Transverse colon (tissue), 4 donors: ENCODE measurements at regions of chr6 and their contacts with region 1.

Region 1: DNA sequence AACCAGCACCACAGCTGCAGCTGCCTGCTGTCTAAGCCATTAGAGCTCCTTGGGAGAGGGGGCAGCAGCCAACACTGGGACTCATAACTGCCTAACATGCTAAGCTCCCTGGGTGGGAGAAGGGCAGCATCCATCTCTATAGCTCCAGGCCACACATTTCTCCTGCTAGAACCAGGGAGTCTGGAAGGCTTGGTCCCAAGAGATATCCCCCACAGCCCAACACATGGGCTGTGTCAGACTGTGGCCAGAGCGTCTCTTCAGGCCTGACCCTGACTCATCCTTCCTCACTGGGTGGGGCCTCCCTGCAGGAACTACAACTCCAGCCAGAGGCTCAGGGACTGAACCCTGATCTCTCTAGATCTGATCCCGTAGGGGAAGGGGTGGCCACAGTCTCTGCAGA is 411.1 kb downstream of the HDGFL1 start:
- DNase-seq: no peak
- H3K4me3 ChIP-seq: no peak overlapping the region
- H3K27ac ChIP-seq: no peak overlapping the region
- H3K4me1 ChIP-seq: no peaks in the 10 kb centered on the region
- H3K27me3 ChIP-seq: no peaks in the 10 kb centered on the region
- CTCF ChIP-seq: no peak
- EP300 ChIP-seq: no peak
- POLR2A ChIP-seq: no peak

Region 2: GRCh38 chr6:23003671-23004467 is 23.4 kb after region 1 on chr6:
- in situ Hi-C with region 1: no loop called
- intact Hi-C with region 1: loop called (anchors 1 kb)
- DNase-seq: no peak
- H3K4me3 ChIP-seq: no peak overlapping the region
- H3K27ac ChIP-seq: no peak overlapping the region
- H3K4me1 ChIP-seq: no peaks in the 10 kb centered on the region
- H3K27me3 ChIP-seq: no peaks in the 10 kb centered on the region
- CTCF ChIP-seq: no peak
- EP300 ChIP-seq: no peak
- POLR2A ChIP-seq: no peak